A549 (cell line): ENCODE measurements at regions of chr15 and their contacts with region 1.

Region 1: DNA sequence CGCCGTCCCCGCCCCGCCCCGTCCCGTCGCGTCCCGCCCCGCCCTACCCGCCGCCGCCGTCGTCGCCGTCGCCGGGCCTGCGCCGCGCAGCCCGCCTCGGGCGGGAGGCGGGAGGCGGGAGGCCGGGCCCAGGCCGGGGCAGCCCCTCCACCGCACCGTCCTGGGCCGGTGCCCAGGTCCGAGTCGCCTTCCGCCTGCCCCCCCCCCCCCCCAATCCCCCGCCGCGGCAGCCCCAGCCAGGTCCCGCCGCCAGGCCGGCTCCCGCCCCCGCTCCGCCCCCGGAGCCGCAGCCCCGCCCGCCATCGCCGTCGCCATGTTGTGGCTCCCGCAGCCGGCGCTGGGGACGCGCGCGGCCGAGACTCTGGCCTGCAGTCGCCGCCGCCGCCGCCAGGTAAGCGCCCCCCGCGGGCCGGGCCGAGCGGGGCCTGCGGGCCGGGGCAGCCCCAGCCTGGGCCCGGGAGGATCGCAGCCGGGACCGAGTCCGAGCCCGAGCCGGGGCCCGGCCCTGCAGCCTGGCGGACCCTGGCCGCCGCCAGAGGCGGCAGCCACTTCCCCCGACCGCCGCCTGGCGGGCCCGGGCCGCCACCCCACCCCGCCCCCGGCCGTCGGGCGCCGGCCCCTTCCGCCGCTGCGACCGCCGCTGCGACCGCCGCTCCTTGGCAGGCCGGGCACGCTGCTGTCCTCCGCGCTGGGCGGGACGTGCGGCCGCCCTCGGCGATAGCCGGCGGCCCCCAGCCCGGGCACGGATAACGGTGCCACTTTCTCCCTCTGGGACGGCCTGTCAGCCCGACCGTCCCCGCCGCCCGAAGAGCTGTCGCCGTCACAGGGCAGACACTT is at the start of gene ZNF592:
- DNase-seq: peak; percentile 60 to 81
- ATAC-seq: peak; percentile 58 to 76
- H3K4me3 ChIP-seq: peak within 1 kb of the TSS; percentile 92
- H3K27ac ChIP-seq: peak within 1 kb of the TSS; percentile 96 to 98
- H3K4me1 ChIP-seq: peaks cover 62% of the 10 kb centered on the region
- CTCF ChIP-seq: peak; percentile 63
- EP300 ChIP-seq: no peak
- POLR2A ChIP-seq: peak; percentile 68
- RAD21 ChIP-seq: peak in 1 of 2 experiments; percentile 41; a peak in 1 of 5 replicates
- polyA plus RNA-seq, gene ZNF592: 12.4 and 15.6 TPM in 2 replicates

Region 2: DNA sequence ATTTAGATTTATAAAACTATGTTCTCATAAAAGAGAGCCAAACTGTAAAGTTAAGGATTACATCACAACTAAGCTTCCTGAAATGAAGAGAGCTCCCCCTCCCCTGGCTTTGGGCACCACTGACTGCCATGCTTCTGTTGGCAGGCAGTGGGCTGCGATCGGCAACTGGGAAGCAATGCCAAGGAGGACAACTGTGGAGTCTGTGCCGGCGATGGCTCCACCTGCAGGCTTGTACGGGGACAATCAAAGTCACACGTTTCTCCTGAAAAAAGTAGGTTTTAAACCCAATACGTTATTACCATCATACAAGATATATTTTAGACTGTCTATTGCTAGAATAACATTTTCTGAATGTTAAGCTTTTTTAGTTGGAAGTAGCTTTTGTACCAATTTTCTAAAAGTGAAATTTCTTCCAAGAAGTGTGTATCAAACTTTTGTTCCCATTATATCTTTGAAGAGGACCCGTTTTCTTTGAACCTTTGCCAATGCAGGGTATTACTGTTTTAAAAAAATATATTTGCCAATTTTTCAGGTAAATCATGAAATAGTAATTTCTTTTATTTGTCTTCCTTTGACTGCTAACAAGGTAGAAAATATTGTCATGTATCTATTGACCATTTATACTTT is 910.4 kb before region 1 on chr15:
- CTCF ChIA-PET with region 1: no interaction called
- POLR2A ChIA-PET with region 1: no interaction called
- DNase-seq: peak; percentile 55 to 67
- ATAC-seq: peak; percentile 93 to 96
- H3K4me3 ChIP-seq: no peak overlapping the region
- H3K27ac ChIP-seq: no peak overlapping the region
- H3K4me1 ChIP-seq: no peaks in the 10 kb centered on the region
- CTCF ChIP-seq: peak; percentile 53
- EP300 ChIP-seq: no peak
- POLR2A ChIP-seq: no peak
- RAD21 ChIP-seq: peak; percentile 42 to 59; a peak in 4 of 5 replicates

Region 3: GRCh38 chr15:84734794-84735479 is 13.6 kb before region 1 on chr15:
- CTCF ChIA-PET with region 1: interaction called, 7 read pairs
- POLR2A ChIA-PET with region 1: interaction called, 33 read pairs
- DNase-seq: peak; percentile 88 to 93
- ATAC-seq: peak; percentile 88 to 95
- H3K4me3 ChIP-seq: peak overlapping the region; percentile 7; the same call in 2 of the 3 replicates
- H3K27ac ChIP-seq: peak overlapping the region; percentile 82 to 91
- H3K4me1 ChIP-seq: peaks cover 41% of the 10 kb centered on the region
- CTCF ChIP-seq: no peak
- EP300 ChIP-seq: peak in 1 of 2 experiments; percentile 43; a peak in 2 of 5 replicates
- POLR2A ChIP-seq: peak; percentile 35
- RAD21 ChIP-seq: peak in 1 of 2 experiments; percentile 36; a peak in 2 of 5 replicates